ENCODE measurements at regions of chr5 and their contacts with region 1.

Region 1: DNA sequence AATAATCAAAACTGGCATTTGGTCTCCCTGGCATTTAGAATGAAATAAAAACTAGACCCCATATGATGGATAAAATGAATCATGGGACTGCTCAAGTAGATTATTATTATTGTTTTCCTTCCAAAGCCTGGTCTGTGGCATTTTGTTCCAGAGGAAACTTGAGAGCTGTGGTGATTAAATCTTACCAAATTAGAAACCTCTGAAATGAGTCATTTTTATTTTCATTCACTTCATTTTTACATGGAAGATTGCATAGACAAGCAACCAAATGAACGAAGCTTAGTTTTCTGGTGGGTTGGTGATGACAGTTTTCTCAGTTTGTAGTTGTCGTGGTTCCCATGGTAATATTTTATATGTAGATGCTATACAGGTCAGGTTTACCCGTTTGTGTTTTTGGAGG is 23.4 kb downstream of the PAM start:
- DNase-seq: no peak
- ATAC-seq: peak; percentile 60
- H3K4me3 Mint-ChIP-seq: no peak overlapping the region
- H3K27ac Mint-ChIP-seq: no peak overlapping the region
- H3K4me1 Mint-ChIP-seq: peaks cover 25% of the 10 kb centered on the region
- H3K27me3 Mint-ChIP-seq: no peaks in the 10 kb centered on the region

Region 2: GRCh38 chr5:102578362-102578761 is 200.1 kb before region 1 on chr5:
- CTCF ChIA-PET with region 1: no interaction called
- POLR2A ChIA-PET with region 1: no interaction called
- DNase-seq: no peak
- ATAC-seq: no peak
- H3K4me3 Mint-ChIP-seq: no peak overlapping the region
- H3K27ac Mint-ChIP-seq: no peak overlapping the region
- H3K4me1 Mint-ChIP-seq: no peaks in the 10 kb centered on the region
- H3K27me3 Mint-ChIP-seq: peaks cover 10% of the 10 kb centered on the region

Region 3: GRCh38 chr5:102681407-102681983 is 97.0 kb before region 1 on chr5:
- CTCF ChIA-PET with region 1: interaction called, 13 read pairs
- POLR2A ChIA-PET with region 1: no interaction called
- DNase-seq: peak; percentile 70
- ATAC-seq: peak; percentile 76
- H3K4me3 Mint-ChIP-seq: no peak overlapping the region
- H3K27ac Mint-ChIP-seq: no peak overlapping the region
- H3K4me1 Mint-ChIP-seq: no peaks in the 10 kb centered on the region
- H3K27me3 Mint-ChIP-seq: peaks cover 7% of the 10 kb centered on the region

Region 4: DNA sequence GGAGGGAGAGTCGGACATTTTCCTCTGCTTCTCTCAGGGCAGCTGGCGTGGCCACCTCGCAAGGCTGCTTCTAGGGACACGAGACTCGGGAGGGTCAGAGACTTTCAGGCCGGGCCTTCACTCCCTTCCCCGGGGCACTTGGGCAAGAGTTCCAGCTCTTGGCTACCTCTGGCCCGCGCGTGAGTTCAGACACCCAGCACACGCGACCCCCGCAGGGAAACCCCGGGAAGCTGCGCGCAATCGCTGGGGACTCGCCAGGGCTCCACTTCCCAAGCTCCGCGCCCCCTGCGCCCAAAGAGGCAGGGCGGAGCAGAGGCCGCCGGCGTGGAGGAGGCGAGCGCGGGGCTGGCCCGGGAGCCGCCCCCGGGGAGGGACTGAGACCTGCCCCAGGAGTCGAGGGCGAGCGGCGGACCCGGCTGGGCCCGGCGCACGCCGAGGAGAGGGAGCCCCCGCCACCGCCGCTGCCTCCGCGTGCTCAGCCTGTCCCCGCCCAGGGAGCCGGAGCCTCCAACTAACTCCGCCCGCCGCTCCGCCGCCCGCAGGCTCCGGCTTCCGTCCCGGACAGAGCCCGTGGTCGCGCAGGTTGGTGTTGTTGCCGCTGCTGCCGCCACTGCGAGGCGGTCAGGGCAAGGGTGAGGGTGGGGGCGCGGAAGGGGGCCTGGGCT is 23.6 kb before region 1 on chr5 and contains the start of gene PAM:
- CTCF ChIA-PET with region 1: interaction called, 12 read pairs
- POLR2A ChIA-PET with region 1: no interaction called
- DNase-seq: peak; percentile 83
- ATAC-seq: peak; percentile 94
- H3K4me3 Mint-ChIP-seq: peak within 1 kb of the TSS; percentile 80
- H3K27ac Mint-ChIP-seq: peak within 1 kb of the TSS; percentile 85
- H3K4me1 Mint-ChIP-seq: peaks cover 40% of the 10 kb centered on the region
- H3K27me3 Mint-ChIP-seq: peaks cover 6% of the 10 kb centered on the region
- total RNA-seq, gene PAM: 16.1 to 16.3 TPM

Region 5: GRCh38 chr5:102762095-102762534 is 16.4 kb before region 1 on chr5:
- CTCF ChIA-PET with region 1: interaction called, 21 read pairs
- POLR2A ChIA-PET with region 1: no interaction called
- DNase-seq: no peak
- ATAC-seq: peak; percentile 63
- H3K4me3 Mint-ChIP-seq: peak overlapping the region; percentile 30
- H3K27ac Mint-ChIP-seq: peak overlapping the region; percentile 43
- H3K4me1 Mint-ChIP-seq: peaks cover 69% of the 10 kb centered on the region
- H3K27me3 Mint-ChIP-seq: no peaks in the 10 kb centered on the region

Region 6: DNA sequence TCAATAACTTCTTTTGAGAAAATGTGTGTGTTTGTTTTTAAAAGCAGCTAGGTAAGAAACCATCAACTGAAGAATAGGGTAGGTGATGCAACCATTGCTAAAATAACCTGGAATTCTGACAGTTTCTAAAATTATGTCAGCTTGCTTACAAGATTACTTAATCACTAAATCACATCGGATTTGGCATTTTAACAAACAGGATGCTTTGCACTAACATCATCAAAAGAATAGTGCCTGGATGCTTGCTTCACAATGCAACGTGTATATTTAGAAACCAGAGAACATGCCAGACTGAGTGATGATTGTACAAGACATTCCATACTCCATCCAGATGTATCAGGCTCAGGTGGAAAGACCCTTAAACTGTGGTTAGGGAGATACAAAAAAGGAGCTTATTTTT is 20.5 kb after region 1 on chr5:
- CTCF ChIA-PET with region 1: interaction called, 17 read pairs
- POLR2A ChIA-PET with region 1: no interaction called
- DNase-seq: no peak
- ATAC-seq: no peak
- H3K4me3 Mint-ChIP-seq: no peak overlapping the region
- H3K27ac Mint-ChIP-seq: no peak overlapping the region
- H3K4me1 Mint-ChIP-seq: peaks cover 24% of the 10 kb centered on the region
- H3K27me3 Mint-ChIP-seq: no peaks in the 10 kb centered on the region

Region 7: DNA sequence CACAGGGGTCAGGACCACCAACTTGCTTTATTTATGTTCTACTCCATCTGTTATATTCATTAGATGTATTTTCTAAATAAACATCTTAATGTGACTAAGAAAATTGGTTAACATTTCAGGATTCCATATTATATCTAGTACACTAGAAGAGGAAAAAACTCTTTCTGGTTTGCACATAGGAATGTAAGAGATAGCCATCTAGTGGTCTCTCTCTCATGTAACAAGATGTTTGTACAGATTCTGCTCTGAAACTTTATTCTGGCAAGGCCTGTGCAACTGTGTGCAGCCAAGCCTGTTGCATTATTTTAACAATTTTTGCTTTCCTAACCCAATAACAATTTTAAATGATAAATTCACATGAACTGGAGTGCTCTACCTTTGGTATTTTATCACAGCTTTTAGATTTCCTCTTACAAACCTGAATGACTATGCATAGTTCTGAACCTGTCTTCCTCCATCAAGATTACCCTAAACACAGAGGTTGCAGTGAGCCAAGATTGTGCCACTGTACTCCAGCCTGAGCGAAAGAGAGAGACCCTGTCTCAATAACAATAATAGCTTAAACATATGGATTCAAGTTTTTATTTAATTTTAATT is 193.3 kb after region 1 on chr5:
- CTCF ChIA-PET with region 1: interaction called, 23 read pairs
- POLR2A ChIA-PET with region 1: no interaction called
- DNase-seq: no peak
- ATAC-seq: peak; percentile 44
- H3K4me3 Mint-ChIP-seq: no peak overlapping the region
- H3K27ac Mint-ChIP-seq: no peak overlapping the region
- H3K4me1 Mint-ChIP-seq: peaks cover 3% of the 10 kb centered on the region
- H3K27me3 Mint-ChIP-seq: no peaks in the 10 kb centered on the region

Region 8: DNA sequence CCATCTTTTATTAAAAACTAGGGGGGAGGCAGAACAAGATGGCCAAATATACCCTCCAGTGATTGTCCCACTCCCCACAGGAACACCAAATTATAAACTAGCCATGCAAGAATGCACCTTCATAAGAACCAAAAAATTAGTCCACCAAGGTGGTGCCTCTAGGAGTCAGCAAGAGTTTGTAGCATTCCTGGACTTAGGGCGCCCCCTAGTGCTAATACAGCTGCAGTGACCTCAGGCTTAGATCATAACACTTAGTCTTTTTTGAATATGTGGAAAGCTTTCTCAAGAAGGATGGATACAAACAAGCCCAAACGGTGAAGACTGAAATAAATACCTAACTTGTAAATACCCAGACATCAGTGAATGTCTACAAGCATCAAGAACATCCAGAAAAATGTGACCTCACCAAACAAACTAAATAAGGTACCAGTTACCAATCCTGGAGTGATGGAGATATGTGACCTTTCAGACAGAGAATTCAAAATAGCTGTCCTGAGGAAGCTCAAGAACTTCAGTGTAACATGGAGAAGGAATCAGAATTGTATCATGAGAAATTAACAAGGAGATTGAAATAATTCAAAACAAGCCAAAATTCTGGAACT is 360.9 kb after region 1 on chr5:
- CTCF ChIA-PET with region 1: interaction called, 11 read pairs
- POLR2A ChIA-PET with region 1: no interaction called
- DNase-seq: peak; percentile 88
- ATAC-seq: peak; percentile 93
- H3K4me3 Mint-ChIP-seq: no peak overlapping the region
- H3K27ac Mint-ChIP-seq: no peak overlapping the region
- H3K4me1 Mint-ChIP-seq: no peaks in the 10 kb centered on the region
- H3K27me3 Mint-ChIP-seq: no peaks in the 10 kb centered on the region

Region 9: GRCh38 chr5:103526164-103526915 is 747.9 kb after region 1 on chr5:
- CTCF ChIA-PET with region 1: no interaction called
- POLR2A ChIA-PET with region 1: no interaction called
- DNase-seq: no peak
- ATAC-seq: no peak
- H3K4me3 Mint-ChIP-seq: no peak overlapping the region
- H3K27ac Mint-ChIP-seq: no peak overlapping the region
- H3K4me1 Mint-ChIP-seq: no peaks in the 10 kb centered on the region
- H3K27me3 Mint-ChIP-seq: no peaks in the 10 kb centered on the region